ENCODE measurements at regions of chr2 and their contacts with region 1.

Region 1: GRCh38 chr2:38581193-38582147 is 21.3 kb downstream of the HNRNPLL start:
- DNase-seq: no peak

Region 2: DNA sequence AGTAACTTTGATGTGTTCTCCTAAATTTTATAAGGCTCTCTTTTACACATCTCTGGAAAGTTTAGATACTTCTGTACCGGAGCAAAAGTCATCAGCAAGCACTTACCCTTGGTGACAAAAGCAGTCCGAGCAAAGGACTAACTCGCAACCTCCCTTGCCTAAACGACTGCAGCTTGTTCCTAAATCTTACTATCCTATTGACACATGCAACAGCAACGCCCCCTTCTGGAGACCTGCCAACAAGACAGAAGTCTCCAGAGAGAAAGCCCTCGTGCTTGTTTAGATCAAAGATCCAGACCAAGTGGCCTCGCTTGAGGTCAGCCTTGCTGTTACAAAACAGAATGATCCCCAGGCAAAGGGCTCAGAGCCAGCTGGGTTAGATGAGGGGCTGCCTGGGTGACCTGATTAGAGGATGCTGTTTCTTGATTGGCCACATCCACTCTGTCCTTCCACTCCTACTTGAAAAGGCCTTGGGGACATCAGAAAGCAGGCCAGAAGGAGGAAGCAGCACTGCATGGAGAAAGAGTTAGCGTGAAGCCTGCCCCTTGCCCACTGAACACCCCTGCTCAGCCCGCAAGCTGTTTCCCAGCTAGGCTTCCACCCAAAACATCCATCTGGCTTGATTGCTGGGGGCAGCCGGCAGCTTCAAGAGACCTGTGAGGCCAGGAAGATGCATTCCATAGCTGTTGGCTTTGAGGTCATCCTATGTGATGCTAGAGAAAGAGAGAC is 73.0 kb before region 1 on chr2:
- intact Hi-C with region 1: no loop called
- DNase-seq: peak; percentile 93

Region 3: GRCh38 chr2:38720613-38721241 is 139.3 kb after region 1 on chr2:
- intact Hi-C with region 1: loop called (anchors 1 to 5 kb)
- DNase-seq: peak; percentile 94

Region 4: GRCh38 chr2:38728694-38729093 is 147.2 kb after region 1 on chr2:
- intact Hi-C with region 1: loop called in 1 of 2 experiments (anchors 5 kb)
- DNase-seq: no peak